Posterior cingulate gyrus (tissue), 11 donors: ENCODE measurements at regions of chr2 and their contacts with region 1.

Region 1: GRCh38 chr2:17830053-17831034 is 14.1 kb downstream of the MSGN1 start:
- DNase-seq: peak; percentile 63 to 97 (median 82)

Region 2: DNA sequence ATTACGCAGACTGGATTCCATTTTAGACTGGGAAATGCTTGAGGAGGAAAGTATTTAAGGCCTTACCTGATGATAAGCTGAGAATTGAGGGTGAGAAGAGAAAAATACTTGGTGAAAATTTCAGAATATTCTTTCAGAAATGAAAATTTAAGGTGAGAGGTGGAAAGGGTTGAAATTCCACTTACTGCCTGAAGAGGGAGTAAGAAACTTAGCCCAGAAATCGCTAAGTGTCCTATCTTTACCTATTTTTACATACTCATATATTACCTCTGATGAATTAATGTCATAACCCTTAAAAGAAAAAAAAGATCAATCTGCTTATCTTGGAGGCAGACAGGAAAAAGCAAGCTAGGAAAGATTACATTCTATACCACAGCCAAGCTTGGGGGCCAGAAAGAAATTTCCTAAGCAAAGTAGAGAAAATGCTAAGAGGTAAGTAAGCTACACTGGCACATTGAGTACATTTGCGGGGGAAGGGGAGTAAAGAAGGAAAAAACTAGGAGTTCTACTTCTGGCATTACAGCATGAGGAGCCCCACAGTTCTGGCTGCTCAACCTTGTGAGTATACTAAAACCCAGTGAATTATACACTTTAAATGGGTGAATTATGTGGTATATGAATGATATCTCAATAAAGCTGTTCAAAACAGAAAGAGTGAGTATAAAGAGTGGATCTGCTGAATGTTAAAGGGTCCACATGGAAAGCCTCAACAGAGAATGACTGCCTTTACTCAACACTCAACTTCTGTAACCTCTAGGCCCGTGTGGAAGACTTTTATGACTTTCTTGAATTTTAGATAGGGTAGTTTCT is 110.6 kb before region 1 on chr2:
- intact Hi-C with region 1: loop called (anchors 5 kb)
- DNase-seq: no peak

Region 3: DNA sequence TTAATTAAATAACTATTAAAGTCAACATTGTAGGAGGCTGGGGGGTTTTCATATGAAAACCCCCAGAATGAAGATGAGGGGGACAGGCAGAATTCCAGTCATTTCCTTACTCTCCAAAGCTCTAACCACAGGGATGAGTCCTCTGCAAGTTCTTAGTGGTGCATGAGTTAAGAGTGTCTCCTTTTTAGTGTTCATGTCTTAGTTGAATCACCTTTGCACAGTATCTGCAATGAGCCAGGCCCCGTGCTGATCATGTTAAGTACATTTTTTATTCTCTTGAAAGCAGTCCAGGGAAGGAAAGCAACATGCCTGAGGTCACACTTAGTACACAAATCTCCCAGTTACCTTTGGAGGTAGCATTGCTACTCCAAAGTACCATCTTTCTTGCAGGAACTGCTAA is 39.8 kb before region 1 on chr2:
- intact Hi-C with region 1: no loop called
- DNase-seq: no peak

Region 4: GRCh38 chr2:18560031-18560796 is 729.9 kb after region 1 on chr2 and contains the start of gene RDH14:
- intact Hi-C with region 1: no loop called
- DNase-seq: peak; percentile 93 to 99 (median 96)